ENCODE measurements at regions of chr13 and their contacts with region 1.

Region 1: GRCh38 chr13:30371649-30372265 is 50.5 kb upstream of the UBE2L5 start:
- DNase-seq: peak in 1 of 2 donors; percentile 88
- ATAC-seq: peak in 2 of 3 donors; percentile 27 to 53
- H3K4me3 ChIP-seq: no peak overlapping the region
- H3K4me3 Mint-ChIP-seq: peak overlapping the region; percentile 56
- H3K27ac ChIP-seq: peak overlapping the region; percentile 64
- H3K27ac Mint-ChIP-seq: peak overlapping the region; percentile 84 to 98
- H3K4me1 ChIP-seq: peaks cover 81% of the 10 kb centered on the region
- H3K4me1 Mint-ChIP-seq: peaks cover 68 to 78% of the 10 kb centered on the region in 2 donors
- H3K27me3 ChIP-seq: no peaks in the 10 kb centered on the region
- H3K27me3 Mint-ChIP-seq: no peaks in the 10 kb centered on the region
- CTCF ChIP-seq: no peak

Region 2: DNA sequence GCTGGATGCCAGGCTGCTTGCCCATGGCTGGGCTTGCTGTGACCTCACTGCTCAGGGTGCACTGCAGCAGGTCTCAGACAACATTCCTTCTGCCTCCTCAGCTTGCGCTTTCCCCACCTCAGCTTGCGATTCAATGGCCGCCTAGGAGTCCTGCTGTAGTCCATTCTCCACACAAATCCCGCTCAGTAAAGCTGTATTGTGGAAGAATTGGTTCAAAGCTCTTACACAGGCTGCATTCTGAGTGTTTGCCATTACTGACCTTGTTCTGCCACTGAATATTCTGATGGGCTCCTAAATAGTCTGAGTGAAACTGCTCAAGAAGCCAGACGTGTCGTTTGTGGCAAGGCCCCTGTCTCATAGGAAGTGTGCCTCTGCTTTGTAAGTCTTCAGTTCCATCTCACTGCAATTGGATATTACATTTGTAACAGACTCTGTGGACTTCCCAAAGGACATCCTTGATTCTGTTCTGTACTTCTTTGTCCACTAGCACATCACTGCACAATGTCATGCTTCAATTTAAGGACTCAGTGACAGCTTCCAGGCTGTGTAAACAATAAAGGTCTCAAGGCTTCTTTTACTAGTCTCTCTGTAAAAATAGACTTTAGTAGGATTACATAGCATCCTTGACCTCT is 114.2 kb before region 1 on chr13:
- intact Hi-C with region 1: no loop called
- DNase-seq: no peak
- ATAC-seq: no peak
- H3K4me3 ChIP-seq: no peak overlapping the region
- H3K4me3 Mint-ChIP-seq: no peak overlapping the region
- H3K27ac ChIP-seq: no peak overlapping the region
- H3K27ac Mint-ChIP-seq: no peak overlapping the region
- H3K4me1 ChIP-seq: no peaks in the 10 kb centered on the region
- H3K4me1 Mint-ChIP-seq: peaks cover 4 to 8% of the 10 kb centered on the region in 2 donors
- H3K27me3 ChIP-seq: no peaks in the 10 kb centered on the region
- H3K27me3 Mint-ChIP-seq: no peaks in the 10 kb centered on the region
- CTCF ChIP-seq: no peak

Region 3: GRCh38 chr13:30395192-30396084 is 23.7 kb after region 1 on chr13:
- intact Hi-C with region 1: loop called (anchors 2 kb)
- DNase-seq: peak; percentile 62 to 87
- ATAC-seq: peak; percentile 66 to 79 (median 69)
- H3K4me3 ChIP-seq: peak overlapping the region; percentile 67
- H3K4me3 Mint-ChIP-seq: peak overlapping the region; percentile 99
- H3K27ac ChIP-seq: peak overlapping the region; percentile 92
- H3K27ac Mint-ChIP-seq: peak overlapping the region; percentile 88 to 91
- H3K4me1 ChIP-seq: peaks cover 12% of the 10 kb centered on the region
- H3K4me1 Mint-ChIP-seq: peaks cover 17 to 20% of the 10 kb centered on the region in 2 donors
- H3K27me3 ChIP-seq: no peaks in the 10 kb centered on the region
- H3K27me3 Mint-ChIP-seq: no peaks in the 10 kb centered on the region
- CTCF ChIP-seq: no peak

Region 4: GRCh38 chr13:30408319-30409101 is 36.8 kb after region 1 on chr13:
- intact Hi-C with region 1: loop called (anchors 1 kb)
- DNase-seq: peak; percentile 78 to 94
- ATAC-seq: peak; percentile 80 to 94 (median 91)
- H3K4me3 ChIP-seq: peak overlapping the region; percentile 29
- H3K4me3 Mint-ChIP-seq: peak overlapping the region; percentile 86
- H3K27ac ChIP-seq: peak overlapping the region; percentile 66
- H3K27ac Mint-ChIP-seq: peak overlapping the region; percentile 81
- H3K4me1 ChIP-seq: peaks cover 25% of the 10 kb centered on the region
- H3K4me1 Mint-ChIP-seq: peaks cover 26 to 31% of the 10 kb centered on the region in 2 donors
- H3K27me3 ChIP-seq: no peaks in the 10 kb centered on the region
- H3K27me3 Mint-ChIP-seq: no peaks in the 10 kb centered on the region
- CTCF ChIP-seq: peak; percentile 57

Region 5: DNA sequence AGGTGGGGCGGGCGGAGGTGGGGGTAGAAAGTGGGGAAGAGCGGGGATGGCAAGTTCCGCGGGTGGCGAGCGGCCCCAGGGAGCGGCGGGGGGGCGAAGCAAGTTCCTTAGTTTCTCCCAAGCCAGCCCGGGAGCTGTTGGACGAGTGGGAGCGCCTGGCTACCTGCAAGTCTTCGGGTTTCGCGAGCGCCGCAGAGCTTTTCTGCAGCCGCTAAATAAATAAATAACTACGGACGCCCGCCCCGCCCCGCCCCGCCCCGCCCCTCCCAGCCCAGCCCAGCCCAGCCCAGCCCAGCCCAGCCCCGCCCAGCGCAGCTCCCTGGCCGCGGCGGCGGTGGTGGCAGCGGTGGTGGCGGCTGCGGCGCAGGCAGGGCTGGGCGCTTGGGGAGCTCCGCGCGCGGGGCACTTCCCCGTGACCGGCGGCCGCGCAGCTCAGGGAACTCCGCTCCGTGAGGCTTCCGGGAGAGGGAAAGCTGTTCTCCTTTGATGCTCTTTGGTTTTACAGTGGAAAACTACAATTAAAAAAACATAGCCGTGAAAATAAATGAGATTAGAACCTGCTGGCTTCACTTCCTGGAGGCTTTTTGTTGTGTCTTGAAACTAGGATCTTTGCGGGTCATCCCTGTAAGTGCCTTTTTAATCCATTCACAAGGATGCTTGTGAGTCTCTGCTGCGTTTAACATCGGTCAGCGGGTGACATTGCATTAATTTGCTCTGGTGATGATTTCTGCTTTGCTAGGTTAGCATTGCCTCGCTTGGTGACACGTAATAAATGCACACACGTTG is 50.5 kb after region 1 on chr13 and contains the start of gene UBE2L5:
- intact Hi-C with region 1: loop called (anchors 2 kb)
- DNase-seq: peak; percentile 67 to 81
- ATAC-seq: peak; percentile 91 to 92 (median 92)
- H3K4me3 ChIP-seq: peak within 1 kb of the TSS; percentile 63
- H3K4me3 Mint-ChIP-seq: peak within 1 kb of the TSS; percentile 94
- H3K27ac ChIP-seq: peak within 1 kb of the TSS; percentile 33
- H3K27ac Mint-ChIP-seq: peak within 1 kb of the TSS; percentile 65 to 81
- H3K4me1 ChIP-seq: peaks cover 9% of the 10 kb centered on the region
- H3K4me1 Mint-ChIP-seq: peaks cover 11 to 15% of the 10 kb centered on the region in 2 donors
- H3K27me3 ChIP-seq: no peaks in the 10 kb centered on the region
- H3K27me3 Mint-ChIP-seq: no peaks in the 10 kb centered on the region
- CTCF ChIP-seq: no peak
- total RNA-seq, gene UBE2L5: not detected

Region 6: DNA sequence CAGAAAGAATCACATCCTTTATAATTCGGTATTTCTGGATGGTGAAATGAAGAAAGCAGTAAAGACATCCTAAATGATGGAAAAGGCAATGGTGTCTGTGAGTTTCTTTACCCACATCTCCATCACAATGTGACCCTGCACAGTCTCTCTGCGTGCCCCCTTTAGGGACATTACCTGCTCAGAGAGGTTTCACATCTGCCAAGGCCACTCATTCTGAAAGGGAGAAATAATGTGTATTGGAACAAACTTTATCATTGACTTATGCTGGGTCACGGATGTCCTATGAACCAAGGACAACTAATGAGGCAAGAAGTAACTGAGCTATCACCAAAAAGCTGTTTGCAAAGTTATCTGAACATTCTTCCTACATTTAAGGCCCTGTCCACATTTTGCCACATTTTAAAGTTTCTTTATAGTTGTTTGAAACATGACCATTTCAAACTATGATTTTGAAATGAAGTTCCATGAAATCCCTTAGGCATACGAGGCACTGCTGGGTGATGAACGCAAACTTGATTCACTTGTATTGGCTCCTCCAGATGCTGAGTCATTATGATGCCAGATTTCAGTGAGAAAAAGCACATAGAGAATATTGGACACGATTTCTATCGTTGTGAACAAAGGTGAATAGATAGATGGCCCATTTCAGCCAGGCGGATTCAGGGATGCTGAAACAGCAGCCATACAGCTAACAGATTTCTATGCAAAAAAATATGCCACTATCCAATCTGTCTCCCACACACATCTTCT is 157.5 kb after region 1 on chr13:
- intact Hi-C with region 1: no loop called
- DNase-seq: no peak
- ATAC-seq: no peak
- H3K4me3 ChIP-seq: no peak overlapping the region
- H3K4me3 Mint-ChIP-seq: no peak overlapping the region
- H3K27ac ChIP-seq: no peak overlapping the region
- H3K27ac Mint-ChIP-seq: no peak overlapping the region
- H3K4me1 ChIP-seq: no peaks in the 10 kb centered on the region
- H3K4me1 Mint-ChIP-seq: no peaks in the 10 kb centered on the region
- H3K27me3 ChIP-seq: no peaks in the 10 kb centered on the region
- H3K27me3 Mint-ChIP-seq: no peaks in the 10 kb centered on the region
- CTCF ChIP-seq: no peak

Region 7: GRCh38 chr13:30617315-30618185 is 245.8 kb after region 1 on chr13 and contains the start of gene USPL1:
- intact Hi-C with region 1: loop called (anchors 5 kb)
- DNase-seq: peak; percentile 98 to 100
- ATAC-seq: peak; percentile 84 to 96 (median 88)
- H3K4me3 ChIP-seq: peak within 1 kb of the TSS; percentile 100
- H3K4me3 Mint-ChIP-seq: no peak within 1 kb of the TSS
- H3K27ac ChIP-seq: peak within 1 kb of the TSS; percentile 98
- H3K27ac Mint-ChIP-seq: no peak within 1 kb of the TSS
- H3K4me1 ChIP-seq: peaks cover 7% of the 10 kb centered on the region
- H3K4me1 Mint-ChIP-seq: peaks cover 0 to 5% of the 10 kb centered on the region in 2 donors
- H3K27me3 ChIP-seq: no peaks in the 10 kb centered on the region
- H3K27me3 Mint-ChIP-seq: no peaks in the 10 kb centered on the region
- CTCF ChIP-seq: no peak
- total RNA-seq, gene USPL1: 34.8 to 39.0 (median 36.9) TPM

Region 8: GRCh38 chr13:30865123-30866049 is 493.6 kb after region 1 on chr13:
- intact Hi-C with region 1: loop called (anchors 10 kb)
- DNase-seq: peak; percentile 30 to 73
- ATAC-seq: peak; percentile 86 to 98 (median 95)
- H3K4me3 ChIP-seq: no peak overlapping the region
- H3K4me3 Mint-ChIP-seq: no peak overlapping the region
- H3K27ac ChIP-seq: no peak overlapping the region
- H3K27ac Mint-ChIP-seq: no peak overlapping the region
- H3K4me1 ChIP-seq: no peaks in the 10 kb centered on the region
- H3K4me1 Mint-ChIP-seq: peaks cover 6% of the 10 kb centered on the region in 2 donors
- H3K27me3 ChIP-seq: peaks cover 2% of the 10 kb centered on the region
- H3K27me3 Mint-ChIP-seq: peaks cover 3 to 10% of the 10 kb centered on the region in 2 donors
- CTCF ChIP-seq: peak; percentile 89

Measured in natural killer cell (primary cell).